CD4-positive, alpha-beta T cell (primary cell): ENCODE measurements at regions of chr12 and their contacts with region 1.

Region 1: DNA sequence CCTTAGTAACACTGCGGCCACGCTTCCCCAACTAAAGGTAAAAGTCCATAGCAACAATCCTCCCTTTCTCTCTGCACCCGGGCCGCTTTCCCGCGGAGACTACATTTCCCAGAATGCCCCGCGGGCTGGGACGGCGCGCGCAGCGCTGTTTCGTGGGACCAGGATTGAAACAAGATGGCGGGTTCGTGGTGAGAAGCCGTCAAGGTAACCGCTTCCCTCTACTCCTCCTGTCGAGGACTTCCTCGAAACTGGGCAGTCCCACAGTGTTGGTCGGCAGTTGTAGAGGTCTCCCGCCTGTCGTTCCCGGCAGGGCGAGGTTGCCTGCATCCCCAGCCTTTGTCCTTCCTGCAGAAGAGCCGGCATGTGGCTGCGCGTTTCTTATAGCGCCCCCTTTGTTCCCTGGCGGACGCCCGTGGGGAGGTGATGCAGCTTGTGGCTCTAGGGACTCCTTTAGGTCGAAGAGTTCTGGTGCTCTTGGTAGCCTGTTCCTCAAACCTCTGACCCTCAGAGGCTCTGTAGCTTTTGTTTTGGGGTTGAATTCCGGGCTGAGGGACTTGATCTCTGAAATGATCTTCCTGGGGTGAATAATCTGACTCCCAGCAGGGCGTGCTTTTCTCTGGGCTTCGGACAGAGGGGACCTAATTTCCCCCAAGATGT is at the start of gene MRPL42:
- DNase-seq: peak; percentile 84 to 94 (median 92)
- ATAC-seq: peak; percentile 95
- H3K4me3 ChIP-seq: peak within 1 kb of the TSS; percentile 92
- H3K4me3 Mint-ChIP-seq: peak within 1 kb of the TSS; percentile 92
- H3K27ac ChIP-seq: peak within 1 kb of the TSS; percentile 77 to 93
- H3K27ac Mint-ChIP-seq: peak within 1 kb of the TSS; percentile 95
- H3K4me1 ChIP-seq: peaks cover 25% of the 10 kb centered on the region
- H3K4me1 Mint-ChIP-seq: peaks cover 40% of the 10 kb centered on the region
- H3K27me3 ChIP-seq: no peaks in the 10 kb centered on the region
- H3K27me3 Mint-ChIP-seq: no peaks in the 10 kb centered on the region
- CTCF ChIP-seq: peak; percentile 82
- total RNA-seq, gene MRPL42: 39.0 to 39.3 TPM

Region 2: GRCh38 chr12:93441617-93442410 is 25.7 kb before region 1 on chr12 and contains the start of gene UBE2N:
- CTCF ChIA-PET with region 1: interaction called, 12 read pairs
- POLR2A ChIA-PET with region 1: interaction called, 22 read pairs
- intact Hi-C with region 1: loop called (anchors 1 to 2 kb)
- DNase-seq: peak; percentile 92 to 98 (median 95)
- ATAC-seq: peak; percentile 81
- H3K4me3 ChIP-seq: peak within 1 kb of the TSS; percentile 76
- H3K4me3 Mint-ChIP-seq: peak within 1 kb of the TSS; percentile 96
- H3K27ac ChIP-seq: peak within 1 kb of the TSS; percentile 89 to 91
- H3K27ac Mint-ChIP-seq: peak within 1 kb of the TSS; percentile 93
- H3K4me1 ChIP-seq: peaks cover 29% of the 10 kb centered on the region
- H3K4me1 Mint-ChIP-seq: peaks cover 53% of the 10 kb centered on the region
- H3K27me3 ChIP-seq: no peaks in the 10 kb centered on the region
- H3K27me3 Mint-ChIP-seq: no peaks in the 10 kb centered on the region
- CTCF ChIP-seq: no peak
- total RNA-seq, gene UBE2N: 89.8 to 101 TPM

Region 3: GRCh38 chr12:93449277-93449676 is 18.2 kb before region 1 on chr12:
- CTCF ChIA-PET with region 1: interaction called, 12 read pairs
- POLR2A ChIA-PET with region 1: interaction called, 10 read pairs
- intact Hi-C with region 1: loop called (anchors 1 to 2 kb)
- DNase-seq: no peak
- ATAC-seq: peak; percentile 14
- H3K4me3 ChIP-seq: no peak overlapping the region
- H3K4me3 Mint-ChIP-seq: peak overlapping the region; percentile 65
- H3K27ac ChIP-seq: no peak overlapping the region
- H3K27ac Mint-ChIP-seq: peak overlapping the region; percentile 91
- H3K4me1 ChIP-seq: peaks cover 19% of the 10 kb centered on the region
- H3K4me1 Mint-ChIP-seq: peaks cover 24% of the 10 kb centered on the region
- H3K27me3 ChIP-seq: no peaks in the 10 kb centered on the region
- H3K27me3 Mint-ChIP-seq: no peaks in the 10 kb centered on the region
- CTCF ChIP-seq: no peak